Heart right ventricle (tissue), 16 donors: ENCODE measurements at regions of chr11 and their contacts with region 1.

Region 1: DNA sequence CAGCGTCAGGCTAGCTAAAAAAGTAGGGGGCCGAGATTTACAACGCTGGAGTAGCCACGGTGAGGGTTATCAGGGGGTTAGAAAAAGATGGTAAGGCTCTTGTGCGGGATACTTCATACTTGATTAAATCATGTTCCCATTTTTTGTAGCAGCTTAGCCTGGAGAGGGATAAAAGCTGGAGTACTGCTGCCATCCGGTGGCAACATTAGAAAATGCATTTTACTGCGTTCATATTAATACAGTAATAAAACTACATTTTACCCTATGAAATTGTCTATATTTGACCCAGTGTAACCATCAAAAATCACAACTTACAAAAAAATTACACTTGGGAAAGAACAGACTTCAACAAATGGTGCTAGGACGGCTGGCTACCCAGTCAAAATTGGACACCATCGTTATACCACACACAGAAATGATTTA is 17.3 kb downstream of the RPUSD4 start:
- DNase-seq: peak in 1 of 2 donors; percentile 36
- ATAC-seq: peak in 7 of 8 donors; percentile 38 to 83 (median 65)
- H3K4me3 ChIP-seq: no peak overlapping the region
- H3K27ac ChIP-seq: peak overlapping the region in 1 of 10 donors; percentile 19
- H3K4me1 ChIP-seq: peaks cover 0 to 19% (median 0%) of the 10 kb centered on the region in 9 donors
- H3K27me3 ChIP-seq: no peaks in the 10 kb centered on the region
- CTCF ChIP-seq: peak; percentile 42 to 78 (median 70)

Region 2: DNA sequence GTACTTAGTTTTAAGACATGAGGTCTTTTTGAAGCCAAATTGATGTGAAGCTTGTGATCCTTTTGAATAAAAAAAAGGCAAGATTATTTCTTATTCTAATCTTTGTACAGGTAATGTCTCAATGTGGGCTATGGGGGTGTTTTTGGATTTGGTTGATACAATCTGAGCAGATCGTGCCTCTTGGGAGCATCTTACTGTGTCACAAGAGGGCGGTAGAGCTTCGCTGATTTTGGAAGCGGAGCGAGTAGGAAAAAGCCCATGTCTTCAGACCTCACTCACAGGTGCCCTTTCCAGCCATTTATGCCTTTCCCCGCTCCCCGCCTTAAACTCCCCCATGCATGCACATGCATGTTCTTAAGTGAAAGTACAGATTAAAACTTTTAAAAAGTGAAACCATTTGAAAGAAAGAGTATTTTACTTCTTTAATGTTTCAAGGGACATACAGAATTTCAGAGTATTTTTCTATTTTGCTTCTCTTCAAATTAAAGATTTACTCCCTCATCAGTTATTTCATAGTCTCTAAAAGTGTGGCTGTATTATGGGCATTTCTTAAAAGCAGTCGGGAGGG is 271.0 kb before region 1 on chr11:
- intact Hi-C with region 1: loop called (anchors 1 to 5 kb)
- DNase-seq: peak; percentile 24 to 68
- ATAC-seq: peak in 7 of 8 donors; percentile 76 to 87 (median 81)
- H3K4me3 ChIP-seq: no peak overlapping the region
- H3K27ac ChIP-seq: no peak overlapping the region
- H3K4me1 ChIP-seq: no peaks in the 10 kb centered on the region
- H3K27me3 ChIP-seq: peaks cover 0 to 17% (median 0%) of the 10 kb centered on the region in 7 donors
- CTCF ChIP-seq: peak; percentile 62 to 87 (median 79)

Region 3: DNA sequence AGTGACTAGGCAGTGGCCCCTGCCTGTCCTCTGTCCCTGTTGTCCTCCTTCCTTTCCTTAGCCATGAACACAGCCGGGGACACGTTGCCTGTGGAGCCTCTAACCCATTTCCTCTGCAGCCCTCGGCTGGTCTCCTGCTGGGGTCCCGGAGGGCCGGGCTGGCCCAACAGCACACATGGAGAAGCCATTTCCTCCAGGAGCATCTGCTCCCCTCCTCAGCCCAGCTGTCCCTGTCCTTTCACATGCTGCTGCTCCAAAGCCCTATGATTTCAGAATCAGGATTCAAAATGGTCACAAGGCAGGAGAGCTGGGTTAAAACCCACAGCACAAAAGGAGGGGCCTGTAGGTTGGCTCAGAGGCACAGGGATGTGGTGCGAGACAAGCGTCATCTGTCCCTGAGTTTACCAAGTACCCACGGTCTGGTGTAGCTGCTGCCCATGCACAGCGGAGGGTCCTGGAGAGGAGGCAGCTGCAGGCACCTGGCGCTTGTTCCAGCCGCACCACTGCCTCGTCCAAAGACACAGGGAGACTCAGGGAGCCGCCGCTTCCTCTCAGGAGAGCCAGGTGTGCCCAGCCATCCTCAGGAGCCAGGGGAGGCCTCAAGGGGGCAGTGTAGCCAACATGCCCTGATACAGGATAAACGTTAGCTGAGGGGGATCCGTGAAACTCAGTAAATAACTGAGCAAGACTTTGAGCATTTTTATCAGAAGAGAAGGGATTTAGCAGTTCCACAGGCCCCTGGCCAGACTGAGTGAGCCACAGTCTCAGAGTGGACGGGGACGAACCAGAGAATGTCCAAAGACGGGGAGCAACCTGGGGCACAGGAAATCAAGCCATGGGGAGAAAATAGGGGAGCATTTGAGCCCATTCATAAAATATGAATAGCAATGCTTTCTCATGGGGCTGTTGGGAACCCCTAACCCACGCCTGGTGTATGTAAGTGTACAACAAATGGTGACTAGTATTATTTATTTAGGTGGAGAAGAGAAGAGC is 252.2 kb before region 1 on chr11:
- intact Hi-C with region 1: loop called in 6 of 10 experiments (anchors 5 kb)
- DNase-seq: peak; percentile 55 to 63
- ATAC-seq: peak; percentile 68 to 89 (median 78)
- H3K4me3 ChIP-seq: no peak overlapping the region
- H3K27ac ChIP-seq: peak overlapping the region in 8 of 10 donors; percentile 5 to 72 (median 54)
- H3K4me1 ChIP-seq: peaks cover 7 to 26% (median 17%) of the 10 kb centered on the region in 9 donors
- H3K27me3 ChIP-seq: peaks cover 0 to 4% (median 0%) of the 10 kb centered on the region in 7 donors
- CTCF ChIP-seq: peak; percentile 30 to 74 (median 70)

Region 4: GRCh38 chr11:126090452-126090851 is 103.7 kb before region 1 on chr11:
- intact Hi-C with region 1: no loop called
- DNase-seq: no peak
- ATAC-seq: no peak
- H3K4me3 ChIP-seq: no peak overlapping the region
- H3K27ac ChIP-seq: no peak overlapping the region
- H3K4me1 ChIP-seq: no peaks in the 10 kb centered on the region
- H3K27me3 ChIP-seq: no peaks in the 10 kb centered on the region
- CTCF ChIP-seq: no peak

Region 5: DNA sequence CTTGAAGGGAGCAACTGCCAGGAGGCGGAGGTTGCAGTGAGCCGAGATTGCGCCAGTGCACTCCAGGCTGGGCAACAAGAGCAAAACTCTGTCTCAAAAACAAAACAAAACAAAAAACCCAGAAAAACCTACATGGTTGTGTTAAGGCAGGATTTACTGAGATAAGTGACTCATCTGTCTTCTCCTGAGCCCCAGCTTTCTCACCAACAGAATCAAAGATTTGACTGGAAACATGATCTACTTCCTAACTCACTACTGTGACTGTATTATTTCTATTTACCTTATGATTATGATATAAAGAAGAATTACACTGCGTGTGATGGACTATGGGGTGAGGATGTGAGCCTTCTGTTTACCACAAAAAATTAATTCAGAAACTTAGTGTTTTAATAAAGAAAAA is 39.3 kb after region 1 on chr11:
- intact Hi-C with region 1: loop called in 1 of 10 experiments (anchors 1 kb)
- DNase-seq: no peak
- ATAC-seq: no peak
- H3K4me3 ChIP-seq: no peak overlapping the region
- H3K27ac ChIP-seq: no peak overlapping the region
- H3K4me1 ChIP-seq: peaks cover 0 to 33% (median 29%) of the 10 kb centered on the region in 9 donors
- H3K27me3 ChIP-seq: no peaks in the 10 kb centered on the region
- CTCF ChIP-seq: no peak

Region 6: DNA sequence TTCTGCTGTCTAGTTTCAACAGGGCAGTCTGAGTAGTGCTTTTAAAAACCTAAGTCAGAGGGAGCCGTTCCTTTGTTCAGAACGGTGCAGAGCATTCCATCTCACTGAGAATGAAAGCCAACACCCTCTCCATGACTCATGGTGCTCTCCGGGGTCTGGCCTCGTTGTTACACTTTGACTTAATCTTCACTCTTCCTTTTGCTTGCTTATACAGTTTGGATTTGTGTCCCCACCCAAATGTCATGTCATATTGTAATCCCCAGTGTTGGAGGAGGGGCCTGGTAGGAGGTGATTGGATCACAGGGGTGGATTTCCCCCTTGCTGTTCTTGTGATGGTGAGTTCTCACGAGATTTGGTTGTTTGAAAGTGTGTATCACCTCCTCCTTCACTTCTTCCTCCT is 453.6 kb after region 1 on chr11:
- intact Hi-C with region 1: no loop called
- DNase-seq: no peak
- ATAC-seq: peak in 2 of 8 donors; percentile 22 to 41
- H3K4me3 ChIP-seq: no peak overlapping the region
- H3K27ac ChIP-seq: no peak overlapping the region
- H3K4me1 ChIP-seq: peaks cover 0 to 5% (median 0%) of the 10 kb centered on the region in 9 donors
- H3K27me3 ChIP-seq: peaks cover 0 to 21% (median 4%) of the 10 kb centered on the region in 7 donors
- CTCF ChIP-seq: no peak